Activated CD4-positive, alpha-beta T cell treated with anti-CD3 and anti-CD28 coated beads, Interleukin-2, amount 10 ng/mL, durations not matched to agents 24 days and 14 days (primary cell): ENCODE measurements at regions of chr14 and their contacts with region 1.

Region 1: DNA sequence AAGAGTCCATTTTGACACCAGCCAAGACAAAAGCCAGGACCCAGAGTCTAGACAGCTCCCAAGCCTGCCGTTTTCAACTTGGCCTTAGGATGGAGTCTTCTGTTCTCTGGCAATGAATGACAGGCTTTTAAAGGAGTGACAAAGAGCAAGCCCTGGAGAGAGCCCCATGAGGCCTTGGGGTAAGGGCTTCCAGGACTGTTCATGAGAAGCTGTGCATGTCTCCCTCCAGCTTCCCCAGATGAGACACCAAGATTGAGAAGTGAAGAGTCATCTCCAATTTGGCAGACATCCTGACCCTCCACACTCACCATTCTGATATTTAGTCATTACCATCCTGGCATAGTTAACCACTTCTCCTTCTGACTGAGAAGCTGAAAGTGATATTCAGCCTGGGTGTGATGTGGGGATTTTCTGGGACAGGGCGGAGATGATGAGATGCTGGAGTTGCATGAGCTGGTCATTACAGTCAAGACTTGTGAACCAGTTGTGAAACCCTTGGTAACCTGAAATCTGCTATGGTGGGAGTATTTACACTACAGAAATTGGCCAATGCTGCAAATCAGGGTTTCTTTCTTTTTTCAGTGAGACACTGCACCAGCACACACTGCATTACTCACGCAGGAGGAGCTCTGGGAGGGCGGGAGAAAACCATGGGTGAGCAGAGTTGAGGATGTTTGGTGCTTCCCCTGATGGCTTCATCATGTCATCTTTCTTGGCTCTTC is 77.8 kb downstream of the VCPKMT start:
- DNase-seq: peak; percentile 87
- H3K4me3 Mint-ChIP-seq: peak overlapping the region; percentile 81
- H3K27ac Mint-ChIP-seq: peak overlapping the region; percentile 98
- H3K4me1 Mint-ChIP-seq: peaks cover 58% of the 10 kb centered on the region
- H3K27me3 Mint-ChIP-seq: no peaks in the 10 kb centered on the region

Region 2: DNA sequence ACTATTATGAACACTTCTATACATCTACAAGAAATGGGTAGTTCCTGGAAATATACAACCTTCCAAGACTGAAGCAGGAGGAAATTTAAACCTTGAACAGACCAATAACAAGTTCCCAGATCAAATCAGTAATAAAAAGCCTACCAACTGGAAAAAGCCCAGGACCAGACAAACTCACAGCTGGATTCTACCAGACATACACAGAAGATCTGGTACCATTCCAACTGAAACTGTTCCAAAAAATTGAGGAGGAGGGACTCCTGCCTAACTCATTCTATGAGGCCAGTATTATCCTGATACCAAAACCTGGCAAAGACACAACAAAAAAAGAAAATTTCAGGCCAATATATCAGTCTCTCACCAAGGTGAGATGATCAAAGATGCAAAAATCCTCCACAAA is 641.8 kb before region 1 on chr14:
- intact Hi-C with region 1: no loop called
- DNase-seq: no peak
- H3K4me3 Mint-ChIP-seq: no peak overlapping the region
- H3K27ac Mint-ChIP-seq: no peak overlapping the region
- H3K4me1 Mint-ChIP-seq: no peaks in the 10 kb centered on the region
- H3K27me3 Mint-ChIP-seq: peaks cover 2% of the 10 kb centered on the region

Region 3: GRCh38 chr14:49892636-49893308 is 145.8 kb before region 1 on chr14 and contains the start of gene ARF6:
- intact Hi-C with region 1: loop called (anchors 1 kb)
- DNase-seq: peak; percentile 99
- H3K4me3 Mint-ChIP-seq: peak within 1 kb of the TSS; percentile 96
- H3K27ac Mint-ChIP-seq: peak within 1 kb of the TSS; percentile 100
- H3K4me1 Mint-ChIP-seq: peaks cover 21% of the 10 kb centered on the region
- H3K27me3 Mint-ChIP-seq: no peaks in the 10 kb centered on the region
- total RNA-seq, gene ARF6: 154 and 160 TPM in 2 replicates

Region 4: DNA sequence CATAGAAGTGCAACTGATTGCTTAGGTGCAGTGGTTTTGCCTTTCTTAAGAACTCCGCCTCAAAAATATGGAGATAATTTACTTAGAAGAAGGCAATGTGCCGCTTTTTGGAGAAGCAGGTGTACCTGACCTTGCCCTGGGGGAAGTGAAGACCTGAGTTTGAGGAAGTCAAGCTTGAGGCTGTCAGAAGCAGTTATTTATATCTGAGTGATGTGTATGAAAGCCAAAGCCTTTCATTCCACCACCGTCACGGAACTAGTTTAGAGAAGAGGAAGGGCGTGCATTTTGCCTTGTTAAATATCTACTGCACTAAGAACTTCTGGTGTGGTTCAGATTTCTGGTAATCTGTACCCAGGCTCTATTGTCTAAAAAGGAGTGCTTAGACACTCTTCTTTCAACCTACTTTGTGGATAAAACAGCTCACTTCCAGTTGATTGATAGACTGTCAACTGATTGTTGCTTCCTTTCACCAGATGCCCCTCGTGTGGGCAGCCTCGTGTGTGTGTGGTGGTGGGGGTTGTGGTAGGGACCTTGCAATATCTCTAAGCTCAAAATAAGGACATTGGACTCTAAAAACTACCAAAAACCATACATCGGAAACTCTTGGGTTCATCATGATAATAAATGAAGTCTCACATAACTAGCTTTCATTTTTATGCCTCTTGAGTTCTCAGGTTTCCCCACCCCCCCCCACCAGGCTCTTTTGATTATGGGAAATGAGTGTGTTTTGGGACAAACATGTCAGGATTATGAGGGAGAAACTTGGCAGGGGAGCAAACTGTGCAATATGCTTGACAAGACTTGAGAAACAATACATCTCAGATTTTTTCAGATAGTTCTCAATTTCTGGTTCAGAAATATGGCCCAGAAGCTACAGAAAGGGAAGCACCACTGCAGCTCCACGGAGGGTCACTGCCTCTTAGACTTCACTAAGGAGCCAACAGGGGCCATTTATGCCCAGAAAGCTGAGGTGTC is 67.1 kb before region 1 on chr14:
- intact Hi-C with region 1: loop called (anchors 1 kb)
- DNase-seq: peak; percentile 88
- H3K4me3 Mint-ChIP-seq: peak overlapping the region; percentile 82
- H3K27ac Mint-ChIP-seq: peak overlapping the region; percentile 99
- H3K4me1 Mint-ChIP-seq: peaks cover 58% of the 10 kb centered on the region
- H3K27me3 Mint-ChIP-seq: no peaks in the 10 kb centered on the region

Region 5: DNA sequence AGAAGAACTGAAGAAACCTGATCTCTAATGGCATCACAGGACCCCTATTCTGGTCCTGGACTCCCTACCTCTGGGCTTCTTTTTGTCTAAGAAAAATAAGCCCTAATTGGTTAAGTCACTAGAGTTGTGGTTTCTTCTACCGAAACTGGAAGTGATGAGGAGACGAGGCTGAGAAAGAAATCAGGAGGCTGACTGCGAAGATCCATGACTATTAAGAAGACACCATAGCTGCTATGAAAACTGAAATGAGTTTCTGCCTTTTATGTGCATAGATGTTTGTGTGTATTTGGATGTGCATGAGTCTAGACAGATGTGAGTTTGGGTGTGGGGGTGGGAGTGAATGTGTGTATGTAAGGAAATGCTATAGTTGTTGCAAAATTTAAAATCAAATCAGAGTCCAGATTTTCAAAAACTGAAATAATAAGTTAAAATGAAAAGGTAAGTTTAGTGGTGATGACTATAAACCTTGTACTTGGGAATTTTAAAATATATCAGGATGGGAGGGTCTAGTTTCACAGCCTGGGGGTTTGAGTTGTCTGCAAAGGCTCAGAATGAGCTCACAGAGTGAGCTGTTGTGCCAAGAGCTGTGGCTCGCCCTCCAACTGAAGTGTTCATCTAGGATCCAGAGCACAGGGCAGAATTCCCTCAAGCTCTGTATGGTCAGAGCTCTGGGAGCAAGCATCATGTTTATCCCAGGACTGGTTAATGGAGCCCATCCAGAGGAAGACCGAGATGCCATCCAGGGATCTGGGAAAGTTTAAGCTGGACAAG is 17.1 kb before region 1 on chr14:
- intact Hi-C with region 1: loop called (anchors 2 kb)
- DNase-seq: peak; percentile 75
- H3K4me3 Mint-ChIP-seq: peak overlapping the region; percentile 52
- H3K27ac Mint-ChIP-seq: peak overlapping the region; percentile 82
- H3K4me1 Mint-ChIP-seq: peaks cover 29% of the 10 kb centered on the region
- H3K27me3 Mint-ChIP-seq: no peaks in the 10 kb centered on the region

Region 6: DNA sequence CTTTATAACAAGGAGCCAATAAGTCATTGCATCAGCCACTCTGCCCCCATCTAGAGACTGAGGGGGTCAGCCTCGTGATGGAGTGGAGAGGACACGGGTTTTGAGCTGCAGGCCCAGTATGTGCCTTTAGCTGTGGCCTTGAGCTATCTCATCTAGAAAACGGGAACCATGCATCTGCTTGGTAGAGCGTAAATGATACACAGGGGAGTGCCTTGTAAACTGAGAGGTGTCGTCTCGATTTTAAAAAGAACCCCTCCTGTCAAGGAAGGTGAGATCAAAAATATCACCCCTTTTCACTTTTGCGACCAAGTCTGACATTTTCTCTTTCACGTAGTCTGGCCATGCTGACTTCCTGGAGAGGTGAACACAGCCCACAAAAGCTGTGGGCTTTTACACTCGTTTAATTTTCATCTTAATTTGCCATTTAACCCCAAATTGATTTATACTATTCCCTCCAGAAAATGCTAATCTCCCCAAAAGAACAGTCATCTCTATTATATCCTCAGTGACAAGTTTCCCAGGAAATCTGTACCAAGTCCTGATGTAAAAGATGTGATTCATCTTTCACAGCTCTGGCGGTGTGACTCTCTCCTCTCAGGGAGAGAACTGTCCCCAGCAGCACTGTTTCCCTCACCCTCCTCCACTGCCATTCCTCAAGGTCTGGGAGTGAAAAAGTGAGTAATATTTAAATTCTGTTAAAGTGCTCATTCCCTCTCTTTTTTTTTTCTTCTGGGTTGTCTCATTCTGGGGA is 47.2 kb after region 1 on chr14:
- intact Hi-C with region 1: loop called (anchors 1 kb)
- DNase-seq: peak; percentile 74
- H3K4me3 Mint-ChIP-seq: peak overlapping the region; percentile 63
- H3K27ac Mint-ChIP-seq: peak overlapping the region; percentile 93
- H3K4me1 Mint-ChIP-seq: peaks cover 80% of the 10 kb centered on the region
- H3K27me3 Mint-ChIP-seq: no peaks in the 10 kb centered on the region

Region 7: GRCh38 chr14:50231475-50232275 is 193.1 kb after region 1 on chr14 and contains the start of gene SOS2:
- intact Hi-C with region 1: loop called (anchors 2 kb)
- DNase-seq: peak; percentile 95
- H3K4me3 Mint-ChIP-seq: peak within 1 kb of the TSS; percentile 92
- H3K27ac Mint-ChIP-seq: peak within 1 kb of the TSS; percentile 90
- H3K4me1 Mint-ChIP-seq: peaks cover 37% of the 10 kb centered on the region
- H3K27me3 Mint-ChIP-seq: no peaks in the 10 kb centered on the region
- total RNA-seq, gene SOS2: 17.7 and 17.8 TPM in 2 replicates

Region 8: DNA sequence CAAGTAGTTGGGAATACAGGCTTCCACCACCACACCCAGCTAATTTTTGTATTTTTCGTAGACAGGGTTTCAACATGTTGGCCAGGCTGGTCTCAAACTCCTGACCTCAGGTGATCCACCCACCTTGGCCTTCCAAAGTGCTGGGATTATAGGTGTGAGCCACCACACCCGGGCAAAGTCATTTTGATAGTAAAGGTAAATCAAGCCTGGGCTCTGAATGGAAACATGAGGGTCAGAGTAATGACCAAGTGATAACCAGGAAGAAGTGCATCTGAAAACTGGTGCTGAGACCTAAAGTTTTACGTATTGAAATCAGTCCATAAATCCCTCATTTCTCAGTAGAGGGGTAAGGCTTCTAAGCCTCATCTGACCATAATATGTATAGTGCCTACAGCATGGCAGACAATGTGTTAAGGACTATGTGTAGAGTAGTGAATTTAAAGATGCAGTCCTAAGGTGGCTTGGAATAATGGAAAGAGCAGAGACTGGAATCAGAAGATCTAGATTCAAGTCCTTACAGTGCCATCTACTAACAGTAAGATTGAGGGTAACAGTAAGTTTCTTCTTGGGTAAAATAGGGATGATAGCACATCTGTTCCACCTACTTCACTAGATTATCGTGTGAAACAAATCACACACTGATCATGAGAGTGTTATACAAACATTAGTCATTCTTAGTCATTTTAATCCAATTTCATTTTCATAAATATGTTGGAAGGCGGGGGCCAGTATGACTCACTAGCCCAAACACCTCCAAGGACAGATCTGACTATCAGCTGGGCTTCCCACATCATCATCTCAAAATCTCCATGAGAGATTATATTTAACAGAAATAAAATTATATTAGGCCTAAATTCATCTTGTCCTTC is 482.6 kb after region 1 on chr14:
- intact Hi-C with region 1: loop called (anchors 1 kb)
- DNase-seq: peak; percentile 77
- H3K4me3 Mint-ChIP-seq: peak overlapping the region; percentile 67
- H3K27ac Mint-ChIP-seq: peak overlapping the region; percentile 94
- H3K4me1 Mint-ChIP-seq: peaks cover 39% of the 10 kb centered on the region
- H3K27me3 Mint-ChIP-seq: no peaks in the 10 kb centered on the region